HEK293T (cell line): ENCODE measurements at regions of chr14 and their contacts with region 1.

Region 1: DNA sequence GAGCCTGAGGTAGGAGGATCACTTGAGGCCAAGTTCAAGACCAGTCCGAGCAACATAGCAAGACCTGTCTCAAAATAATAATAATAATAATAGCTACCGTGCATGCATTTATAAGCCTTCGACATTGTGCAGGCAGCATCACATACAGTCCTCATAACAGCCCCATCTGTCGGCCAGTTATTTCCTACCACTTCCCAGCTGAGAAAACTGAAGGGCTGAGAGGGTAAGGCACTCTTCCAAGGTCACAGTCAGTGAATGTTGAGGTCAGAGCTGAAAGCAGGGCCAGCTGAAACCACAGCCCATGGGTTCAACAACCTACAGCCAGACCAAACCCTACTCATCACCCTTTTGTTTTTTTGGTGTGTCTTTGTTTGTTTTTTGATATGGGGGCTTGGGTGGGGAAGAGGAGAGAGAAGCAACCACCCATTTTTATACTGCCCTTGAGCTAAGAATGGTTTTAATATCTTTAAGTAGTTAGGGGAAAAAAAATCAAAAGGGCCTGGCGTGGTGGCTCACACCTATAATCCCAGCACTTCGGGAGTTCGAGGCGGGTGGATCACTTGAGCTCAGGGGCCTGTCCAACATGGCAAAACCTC is 16.8 kb upstream of the ITPK1 start:
- DNase-seq: peak; percentile 50

Region 2: GRCh38 chr14:93153121-93153520 is 20.6 kb after region 1 on chr14:
- CTCF ChIA-PET with region 1: no interaction called
- POLR2A ChIA-PET with region 1: no interaction called
- DNase-seq: no peak

Region 3: DNA sequence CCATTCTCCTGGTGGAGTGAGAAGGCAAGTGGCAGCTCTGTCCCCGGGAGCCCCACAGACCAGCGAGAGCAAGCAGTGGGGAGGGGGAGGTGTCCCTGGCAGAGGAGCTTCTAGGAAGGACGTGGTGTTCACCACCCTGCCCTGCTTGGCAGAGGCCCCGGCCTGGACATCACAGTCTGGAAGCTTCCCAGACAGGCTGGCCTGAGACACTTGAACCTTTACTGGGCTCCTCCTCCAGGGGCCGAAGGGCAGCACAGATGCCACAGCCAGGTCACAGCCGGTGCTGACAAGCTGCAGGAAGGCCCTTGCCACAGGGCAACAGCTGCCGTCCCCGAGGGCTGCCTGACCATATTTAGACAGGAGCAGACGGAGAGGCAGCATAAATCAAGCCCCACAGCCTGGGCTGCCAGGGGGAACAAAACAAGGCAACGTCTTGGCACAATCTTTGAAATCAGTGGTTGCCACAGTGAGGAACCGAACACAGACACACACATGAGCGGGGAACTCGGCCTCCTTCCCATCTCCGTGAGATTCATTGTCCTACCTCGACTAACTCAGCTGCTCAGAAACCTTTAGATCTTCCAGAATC is 627.2 kb after region 1 on chr14:
- CTCF ChIA-PET with region 1: interaction called, 11 read pairs
- POLR2A ChIA-PET with region 1: no interaction called
- DNase-seq: no peak